PC-9 (cell line): ENCODE measurements at regions of chr19 and their contacts with region 1.

Region 1: GRCh38 chr19:9584073-9584833 is at the start of gene ZNF121:
- DNase-seq: peak; percentile 76
- H3K4me3 ChIP-seq: peak within 1 kb of the TSS; percentile 78
- H3K27ac ChIP-seq: peak within 1 kb of the TSS; percentile 76
- H3K4me1 ChIP-seq: 0 out of 2 replicates have a peak, but pooled peaks cover 5% of the 10 kb centered on the region
- H3K27me3 ChIP-seq: no peaks in the 10 kb centered on the region
- CTCF ChIP-seq: no peak
- total RNA-seq, gene ZNF121: 36.6 and 51.3 TPM in 2 replicates

Region 2: DNA sequence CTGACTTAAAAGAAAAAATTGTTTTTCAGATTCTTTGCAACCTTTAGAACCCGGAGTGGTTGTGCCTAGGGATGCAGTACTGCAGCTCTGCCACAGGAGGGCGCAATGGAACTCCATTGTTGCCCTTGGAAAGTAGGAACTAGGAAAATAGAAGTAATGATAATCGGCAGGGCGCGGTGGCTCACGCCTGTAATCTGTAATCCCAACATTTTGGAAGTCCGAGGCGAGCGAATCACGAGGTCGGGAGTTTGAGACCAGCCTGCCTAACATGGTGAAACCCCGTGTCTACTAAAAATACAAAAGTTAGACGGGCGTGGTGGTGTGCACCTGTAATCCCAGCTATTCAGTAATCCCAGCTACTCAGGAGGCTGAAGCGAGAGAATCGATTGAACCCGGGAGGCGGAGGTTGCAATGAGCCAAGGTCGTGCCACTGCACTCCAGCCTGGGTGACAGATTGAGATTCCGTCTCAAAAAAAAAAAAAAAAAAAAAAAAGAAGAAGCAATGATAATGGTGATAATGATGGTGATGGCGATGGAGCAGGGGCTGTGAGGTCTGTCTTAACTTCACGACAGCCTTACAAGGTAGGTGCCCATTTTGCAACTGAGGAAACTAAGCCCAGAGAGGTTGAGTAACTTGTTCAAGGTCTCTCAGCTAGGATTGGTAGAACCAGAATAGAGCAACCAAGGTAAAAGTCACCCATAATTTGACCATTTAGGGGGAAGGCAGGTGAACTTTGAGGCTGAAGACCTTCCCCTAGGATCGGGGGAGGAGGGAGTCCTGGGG is 968.2 kb before region 1 on chr19:
- CTCF ChIA-PET with region 1: interaction called, 15 read pairs
- POLR2A ChIA-PET with region 1: no interaction called
- intact Hi-C with region 1: no loop called
- DNase-seq: peak in 1 of 2 experiments; percentile 48
- H3K4me3 ChIP-seq: no peak overlapping the region
- H3K27ac ChIP-seq: no peak overlapping the region
- H3K4me1 ChIP-seq: no peaks in the 10 kb centered on the region
- H3K27me3 ChIP-seq: peaks cover 16% of the 10 kb centered on the region; the same call in 1 of the 2 replicates
- CTCF ChIP-seq: peak; percentile 98

Region 3: DNA sequence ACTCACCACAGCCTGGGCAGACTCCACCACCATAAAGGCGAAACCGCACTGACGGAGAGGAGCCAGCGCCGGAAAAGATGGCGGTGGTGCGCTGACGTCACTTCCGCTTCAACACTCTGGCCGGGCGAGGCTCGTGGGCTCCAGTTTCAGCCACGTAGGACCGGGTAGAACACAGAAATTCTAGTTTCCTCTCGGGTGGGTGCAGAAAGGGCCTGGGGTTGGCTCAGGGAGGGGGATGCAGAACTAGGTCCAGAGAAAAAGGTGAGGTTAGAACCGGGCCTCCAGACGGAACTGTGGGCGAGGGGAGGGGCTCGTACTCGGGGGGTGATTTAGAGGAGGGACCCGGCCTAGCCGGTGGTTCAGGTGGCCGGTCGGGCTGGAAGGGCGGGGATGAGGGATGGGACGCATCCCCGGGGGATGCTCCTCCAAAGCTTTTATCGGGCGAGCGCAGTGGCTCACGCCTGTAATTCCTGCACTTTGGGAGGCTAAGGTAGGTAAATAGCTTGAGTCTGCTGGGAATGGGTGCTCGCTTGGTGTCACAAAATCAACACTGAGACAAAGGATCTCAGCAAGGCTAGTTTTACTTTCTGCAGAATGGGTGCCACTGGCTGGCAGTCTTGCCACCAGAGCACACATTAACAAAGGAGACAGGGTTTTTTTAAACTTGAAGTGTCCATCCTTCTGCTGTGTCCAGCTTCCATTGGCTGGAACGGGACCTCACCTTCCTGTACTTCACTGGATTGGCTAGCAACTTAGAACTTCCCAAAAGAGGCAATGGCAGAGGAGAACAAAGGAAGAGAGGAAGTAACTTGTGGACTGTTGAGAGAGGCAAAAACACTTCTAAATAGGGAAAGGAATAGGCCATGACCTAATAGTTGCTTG is 37.1 kb after region 1 on chr19 and contains the start of gene ZNF561:
- CTCF ChIA-PET with region 1: no interaction called
- POLR2A ChIA-PET with region 1: interaction called, 11 read pairs
- intact Hi-C with region 1: loop called (anchors 2 kb)
- DNase-seq: peak; percentile 62 to 74
- H3K4me3 ChIP-seq: peak within 1 kb of the TSS; percentile 86
- H3K27ac ChIP-seq: peak within 1 kb of the TSS; percentile 65
- H3K4me1 ChIP-seq: peaks cover 9% of the 10 kb centered on the region
- H3K27me3 ChIP-seq: no peaks in the 10 kb centered on the region
- CTCF ChIP-seq: no peak
- total RNA-seq, gene ZNF561: 28.9 and 31.2 TPM in 2 replicates

Region 4: GRCh38 chr19:9914315-9915207 is 330.3 kb after region 1 on chr19:
- CTCF ChIA-PET with region 1: no interaction called
- POLR2A ChIA-PET with region 1: no interaction called
- intact Hi-C with region 1: loop called (anchors 2 kb)
- DNase-seq: peak; percentile 63 to 85
- H3K4me3 ChIP-seq: peak overlapping the region; percentile 68
- H3K27ac ChIP-seq: no peak overlapping the region
- H3K4me1 ChIP-seq: no peaks in the 10 kb centered on the region
- H3K27me3 ChIP-seq: no peaks in the 10 kb centered on the region
- CTCF ChIP-seq: peak; percentile 84